Activated CD4-positive, alpha-beta T cell treated with anti-CD3 and anti-CD28 coated beads, Interleukin-2, amount 10 ng/mL, durations not matched to agents 24 days and 14 days (primary cell): ENCODE measurements at regions of chr3 and their contacts with region 1.

Region 1: DNA sequence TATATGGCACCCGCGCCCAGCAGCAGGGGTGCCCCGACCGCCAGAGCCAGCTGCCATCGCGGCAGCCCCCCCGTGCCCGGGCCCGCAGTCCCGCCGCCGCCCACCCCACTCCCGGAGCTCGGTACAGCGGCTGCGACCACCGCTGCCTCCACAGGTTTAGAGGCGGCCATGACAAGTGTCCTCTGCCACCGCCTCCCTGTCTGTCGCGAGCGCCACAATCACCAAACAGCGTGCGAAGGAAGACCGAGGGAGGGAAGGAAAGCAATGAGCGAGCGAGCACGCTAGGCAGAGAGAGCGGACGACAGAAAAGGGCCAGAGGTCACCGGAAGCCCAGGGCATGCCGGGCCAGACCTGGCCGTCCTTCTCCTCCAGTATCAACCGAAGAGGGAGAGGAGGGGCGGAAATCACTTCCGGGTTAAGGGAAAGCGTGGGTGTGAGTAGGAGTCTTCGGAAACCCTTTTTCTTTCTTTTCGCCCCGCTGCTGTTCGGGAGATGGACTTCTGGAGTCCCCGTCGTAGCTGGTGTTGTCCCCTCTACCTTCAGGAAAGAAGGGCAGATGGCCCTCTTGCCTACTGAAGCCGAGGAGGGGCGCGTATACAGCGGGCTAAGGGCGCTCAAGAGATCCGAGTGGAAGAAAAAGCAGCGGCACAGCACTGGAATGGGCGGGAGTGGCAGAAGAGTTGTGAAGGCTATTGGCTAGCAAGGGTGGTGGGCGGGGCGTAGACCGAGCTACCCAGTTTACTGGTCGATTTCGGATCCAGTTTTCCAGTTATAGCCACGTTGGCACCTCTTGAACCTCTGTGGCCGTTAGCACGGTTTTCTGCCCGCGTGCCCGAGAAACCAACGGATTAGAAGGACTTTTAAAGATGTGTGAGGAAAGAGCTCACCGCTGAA is at the starts of genes LNP1 and TOMM70:
- DNase-seq: peak; percentile 98
- H3K4me3 Mint-ChIP-seq: peak within 1 kb of the TSS; percentile 93
- H3K27ac Mint-ChIP-seq: peak within 1 kb of the TSS; percentile 98
- H3K4me1 Mint-ChIP-seq: peaks cover 36% of the 10 kb centered on the region
- H3K27me3 Mint-ChIP-seq: no peaks in the 10 kb centered on the region
- total RNA-seq, gene LNP1: 2.1 and 2.6 TPM in 2 replicates
- total RNA-seq, gene TOMM70: 57.4 and 61.5 TPM in 2 replicates

Region 2: GRCh38 chr3:99817437-99818240 is 583.4 kb before region 1 on chr3 and contains the start of gene CMSS1:
- intact Hi-C with region 1: loop called (anchors 1 kb)
- DNase-seq: peak; percentile 99
- H3K4me3 Mint-ChIP-seq: peak within 1 kb of the TSS; percentile 100
- H3K27ac Mint-ChIP-seq: peak within 1 kb of the TSS; percentile 99
- H3K4me1 Mint-ChIP-seq: peaks cover 31% of the 10 kb centered on the region
- H3K27me3 Mint-ChIP-seq: peaks cover 2% of the 10 kb centered on the region
- total RNA-seq, gene CMSS1: 117 and 126 TPM in 2 replicates

Region 3: DNA sequence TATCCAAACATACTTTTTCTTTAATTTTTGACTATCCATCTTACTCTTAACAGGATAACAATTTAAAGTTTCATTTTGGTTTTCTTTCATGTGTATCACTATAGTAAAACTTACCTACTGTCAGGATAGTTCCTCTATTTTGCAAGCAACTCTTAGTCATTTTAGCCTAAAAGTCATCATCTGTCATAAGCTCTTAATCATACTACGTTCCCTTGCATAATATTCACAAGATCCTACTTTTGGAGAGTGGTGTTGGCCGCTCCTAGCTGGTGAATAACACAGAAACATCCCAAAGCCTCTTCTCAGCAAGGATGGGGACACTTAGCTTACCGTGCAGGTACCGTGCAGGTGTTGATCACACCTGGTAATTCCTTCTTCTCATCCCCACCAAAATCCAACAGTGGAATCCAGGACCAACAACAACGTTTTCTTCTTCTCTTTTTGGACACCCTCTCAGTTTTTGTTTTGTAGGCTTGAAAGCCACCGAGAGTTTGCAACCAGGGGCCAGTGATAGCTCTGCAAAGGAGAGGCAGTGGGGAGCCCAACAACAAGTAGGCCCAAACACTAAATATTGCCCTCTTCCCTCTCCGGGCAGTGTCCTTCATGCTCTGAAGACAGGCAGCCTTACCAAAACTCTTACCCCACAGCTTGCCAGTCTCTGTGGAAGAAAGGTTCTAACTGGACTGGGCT is 287.2 kb before region 1 on chr3:
- intact Hi-C with region 1: no loop called
- DNase-seq: no peak
- H3K4me3 Mint-ChIP-seq: no peak overlapping the region
- H3K27ac Mint-ChIP-seq: no peak overlapping the region
- H3K4me1 Mint-ChIP-seq: peaks cover 4% of the 10 kb centered on the region
- H3K27me3 Mint-ChIP-seq: no peaks in the 10 kb centered on the region

Region 4: DNA sequence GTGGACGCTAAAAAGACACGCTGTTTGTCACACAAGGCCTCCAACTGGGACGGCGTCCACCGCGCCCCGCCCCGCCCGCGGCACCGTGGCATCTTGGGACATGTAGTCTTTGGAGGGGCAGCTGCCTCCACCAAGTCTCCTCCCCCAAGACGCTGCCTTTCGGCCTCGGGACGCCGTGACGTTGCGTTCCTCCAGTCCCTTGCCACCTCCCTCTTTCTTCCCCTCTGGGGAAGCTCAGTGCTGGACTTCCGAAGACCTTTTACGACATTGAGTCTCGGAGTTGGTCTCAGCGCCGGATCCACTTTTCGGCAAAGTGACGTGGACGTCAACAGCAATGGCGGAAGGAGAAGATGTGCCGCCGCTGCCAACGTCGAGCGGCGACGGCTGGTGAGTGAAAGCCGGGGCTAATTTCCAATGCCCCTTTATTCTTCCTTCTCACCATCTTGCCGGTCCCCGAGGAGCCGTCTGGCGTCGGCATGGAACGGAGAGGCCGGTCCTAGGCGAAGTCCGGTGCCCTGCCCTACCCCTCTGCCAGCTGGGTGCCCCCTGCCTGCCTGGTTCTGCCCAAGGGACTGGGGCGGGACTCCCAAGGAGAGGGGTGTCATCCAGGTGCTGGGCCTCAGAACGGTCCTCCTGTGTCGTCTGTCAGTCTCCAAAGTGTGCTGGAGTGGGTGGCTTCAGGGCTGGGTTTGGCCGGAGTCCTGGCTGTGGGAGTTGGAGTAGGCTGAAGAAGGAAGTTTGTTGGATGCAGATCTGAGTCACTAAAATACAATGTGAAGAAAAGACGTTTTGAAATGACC is 140.1 kb before region 1 on chr3 and contains the start of gene TBC1D23:
- intact Hi-C with region 1: loop called (anchors 1 kb)
- DNase-seq: peak; percentile 99
- H3K4me3 Mint-ChIP-seq: peak within 1 kb of the TSS; percentile 98
- H3K27ac Mint-ChIP-seq: peak within 1 kb of the TSS; percentile 96
- H3K4me1 Mint-ChIP-seq: peaks cover 33% of the 10 kb centered on the region
- H3K27me3 Mint-ChIP-seq: no peaks in the 10 kb centered on the region
- total RNA-seq, gene TBC1D23: 17.6 and 19.4 TPM in 2 replicates

Region 5: DNA sequence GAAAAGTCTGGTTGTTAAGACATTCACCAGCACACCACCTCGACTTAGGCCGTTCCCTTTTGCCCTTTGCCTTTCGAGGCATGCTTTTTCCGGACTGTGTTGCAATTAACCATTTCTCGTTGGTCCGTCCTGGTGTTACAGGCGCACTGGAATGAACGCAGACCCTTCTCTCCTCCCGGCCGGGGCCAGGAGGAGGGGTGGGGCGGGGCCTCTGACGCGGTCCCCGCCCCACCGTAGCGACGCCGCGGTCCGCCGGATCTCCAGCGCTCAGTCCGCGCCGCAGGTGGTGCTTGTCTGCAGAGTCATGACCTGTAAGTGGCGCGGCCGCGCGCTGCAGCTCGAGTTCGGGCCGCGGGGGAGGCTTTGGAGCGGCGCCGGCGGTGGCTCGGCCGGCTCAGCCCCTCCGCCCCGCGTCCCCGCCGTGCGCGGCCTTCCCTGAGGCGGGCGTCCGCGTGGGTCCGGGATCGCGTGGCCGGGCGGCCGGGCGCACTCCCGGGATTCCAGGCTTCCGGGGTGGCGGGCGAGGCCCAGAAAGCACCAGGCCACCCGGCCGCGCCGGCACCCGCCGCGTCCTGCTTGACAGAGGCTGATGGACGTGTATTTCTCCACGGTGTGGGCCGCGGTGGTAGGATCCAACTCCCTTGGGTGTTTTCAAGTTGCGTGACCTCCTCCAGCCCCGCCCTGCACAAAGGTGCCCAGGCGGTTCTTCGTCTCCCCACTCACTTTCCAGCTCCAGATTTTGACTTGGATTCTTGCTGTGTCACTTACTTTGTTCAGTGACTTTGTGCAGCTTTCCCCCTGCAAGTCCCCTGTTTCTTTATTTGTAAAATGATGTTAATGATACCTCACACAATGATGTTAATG is 66.3 kb before region 1 on chr3 and contains the start of gene NIT2:
- intact Hi-C with region 1: loop called (anchors 1 kb)
- DNase-seq: peak; percentile 93
- H3K4me3 Mint-ChIP-seq: peak within 1 kb of the TSS; percentile 95
- H3K27ac Mint-ChIP-seq: peak within 1 kb of the TSS; percentile 98
- H3K4me1 Mint-ChIP-seq: peaks cover 18% of the 10 kb centered on the region
- H3K27me3 Mint-ChIP-seq: no peaks in the 10 kb centered on the region
- total RNA-seq, gene NIT2: 75.5 and 79.2 TPM in 2 replicates

Region 6: DNA sequence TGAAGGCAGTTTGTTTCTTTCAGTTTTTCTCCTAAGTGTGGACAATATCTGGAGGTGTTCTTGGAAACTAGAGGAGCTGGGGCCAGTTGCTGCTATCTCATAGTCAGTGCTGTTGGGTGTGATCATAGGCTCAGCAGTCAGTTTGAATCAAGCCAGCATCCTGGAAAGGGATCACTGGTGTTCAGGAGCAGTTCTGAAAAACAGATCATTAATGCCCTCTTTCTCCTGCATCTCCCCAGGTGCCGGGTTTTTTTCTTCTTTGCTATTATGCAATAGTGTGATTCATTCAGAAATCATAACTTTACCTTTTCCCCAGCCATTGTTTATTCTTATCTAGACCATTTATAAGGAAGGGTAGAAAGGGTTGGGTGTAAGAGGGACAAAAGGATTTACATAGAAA is 24.3 kb after region 1 on chr3:
- intact Hi-C with region 1: no loop called
- DNase-seq: no peak
- H3K4me3 Mint-ChIP-seq: no peak overlapping the region
- H3K27ac Mint-ChIP-seq: no peak overlapping the region
- H3K4me1 Mint-ChIP-seq: no peaks in the 10 kb centered on the region
- H3K27me3 Mint-ChIP-seq: peaks cover 12% of the 10 kb centered on the region

Region 7: DNA sequence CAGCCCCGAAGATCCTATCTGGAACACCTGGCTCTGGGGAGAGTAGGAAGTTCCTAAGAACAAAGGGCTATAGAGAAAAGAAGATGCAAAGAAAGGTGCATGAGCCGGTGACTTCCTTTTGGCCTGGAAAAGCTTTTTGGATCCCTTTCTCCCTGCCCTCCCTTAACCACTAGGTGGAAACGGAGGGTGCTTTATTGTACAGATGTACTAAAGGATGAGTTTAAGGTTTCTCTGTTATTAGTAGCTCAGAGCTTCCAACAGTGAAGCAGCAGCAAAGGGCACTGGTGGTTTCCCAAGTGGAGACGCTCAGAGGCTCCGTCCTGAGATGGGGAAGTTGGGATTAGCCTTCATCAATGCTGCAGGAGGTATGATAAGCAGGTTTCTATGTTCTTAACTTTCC is 202.4 kb after region 1 on chr3:
- intact Hi-C with region 1: loop called (anchors 5 kb)
- DNase-seq: no peak
- H3K4me3 Mint-ChIP-seq: peak overlapping the region; percentile 72
- H3K27ac Mint-ChIP-seq: peak overlapping the region; percentile 83
- H3K4me1 Mint-ChIP-seq: peaks cover 27% of the 10 kb centered on the region
- H3K27me3 Mint-ChIP-seq: peaks cover under 1% of the 10 kb centered on the region

Region 8: GRCh38 chr3:101518421-101518871 is 1117.4 kb after region 1 on chr3:
- intact Hi-C with region 1: loop called (anchors 5 kb)
- DNase-seq: peak; percentile 84
- H3K4me3 Mint-ChIP-seq: peak overlapping the region; percentile 46
- H3K27ac Mint-ChIP-seq: peak overlapping the region; percentile 92
- H3K4me1 Mint-ChIP-seq: peaks cover 41% of the 10 kb centered on the region
- H3K27me3 Mint-ChIP-seq: no peaks in the 10 kb centered on the region

Region 9: DNA sequence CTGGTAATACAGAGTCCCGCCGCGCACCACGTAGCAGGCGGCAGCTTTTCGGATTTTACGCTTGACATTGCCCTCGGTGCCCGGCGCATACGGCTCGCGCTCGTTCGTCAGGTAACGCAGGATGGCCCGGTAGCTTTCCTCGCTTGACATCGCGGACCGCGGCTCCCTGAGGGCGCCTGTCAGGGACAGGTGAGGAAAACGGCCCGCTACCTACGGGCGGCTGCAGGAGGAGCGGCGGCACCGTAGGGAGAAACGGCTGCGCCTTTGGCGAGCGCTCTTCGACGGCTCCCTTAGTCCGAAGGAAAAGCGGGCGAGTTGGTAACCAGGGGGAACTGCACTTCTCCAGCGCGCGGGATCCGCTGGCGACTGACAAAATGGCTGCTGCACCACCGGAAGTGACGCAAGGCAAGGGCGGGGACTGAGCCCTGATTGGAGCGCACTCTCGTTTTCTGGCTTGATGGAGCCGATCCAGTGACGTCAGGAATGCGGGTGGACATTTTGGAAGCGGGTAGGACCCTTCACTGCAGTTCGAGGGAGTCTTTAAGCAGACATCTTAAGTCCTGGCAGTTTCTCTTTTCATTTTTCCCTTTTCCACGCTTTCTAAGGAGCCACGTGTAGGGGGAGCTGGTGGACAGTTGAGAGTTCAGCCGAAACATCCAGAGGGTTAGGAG is 1275.9 kb after region 1 on chr3 and contains the start of gene ZBTB11:
- intact Hi-C with region 1: loop called (anchors 5 kb)
- DNase-seq: peak; percentile 100
- H3K4me3 Mint-ChIP-seq: peak within 1 kb of the TSS; percentile 89
- H3K27ac Mint-ChIP-seq: peak within 1 kb of the TSS; percentile 97
- H3K4me1 Mint-ChIP-seq: peaks cover 36% of the 10 kb centered on the region
- H3K27me3 Mint-ChIP-seq: no peaks in the 10 kb centered on the region
- total RNA-seq, gene ZBTB11: 29.0 and 30.2 TPM in 2 replicates